GM10248 (cell line): ENCODE measurements at regions of chr2 and their contacts with region 1.

Region 1: GRCh38 chr2:148058641-148059040 is 37.8 kb downstream of the MBD5 start:
- DNase-seq: no peak
- CTCF ChIP-seq: no peak

Region 2: GRCh38 chr2:147806846-147807245 is 251.8 kb before region 1 on chr2:
- CTCF ChIA-PET with region 1: no interaction called
- POLR2A ChIA-PET with region 1: no interaction called
- DNase-seq: no peak
- CTCF ChIP-seq: no peak

Region 3: DNA sequence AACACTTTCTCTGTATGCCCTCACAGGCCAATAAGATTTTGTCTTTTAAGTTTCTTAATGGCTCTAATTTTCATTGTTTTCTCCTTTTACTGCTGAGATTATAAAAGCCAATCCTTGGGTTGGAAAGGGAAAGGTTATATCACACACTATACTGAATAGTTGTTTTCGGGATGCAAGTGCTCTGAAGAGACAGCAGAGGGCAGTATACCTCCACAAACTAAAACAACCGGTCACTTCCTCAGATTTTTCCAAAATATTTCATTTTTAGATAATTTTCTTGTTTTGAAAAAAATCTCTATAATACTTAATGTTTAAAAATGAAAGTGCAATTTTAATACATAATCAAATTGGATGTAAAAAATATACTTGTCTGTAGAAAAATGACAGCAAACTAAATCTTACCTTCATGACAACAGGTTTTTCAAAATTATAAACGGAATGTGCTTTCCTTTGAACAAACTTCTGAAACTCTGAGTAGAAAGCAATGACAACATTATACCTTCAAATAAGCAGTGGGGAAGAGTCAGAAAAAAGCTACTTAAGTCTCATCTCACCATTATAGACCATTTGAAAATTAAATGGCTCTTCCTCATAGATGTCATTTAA is 120.8 kb before region 1 on chr2:
- CTCF ChIA-PET with region 1: no interaction called
- POLR2A ChIA-PET with region 1: interaction called, 17 read pairs
- DNase-seq: peak; percentile 5
- CTCF ChIP-seq: peak; percentile 72

Region 4: GRCh38 chr2:148042219-148042618 is 16.4 kb before region 1 on chr2:
- CTCF ChIA-PET with region 1: no interaction called
- POLR2A ChIA-PET with region 1: no interaction called
- DNase-seq: peak; percentile 38
- CTCF ChIP-seq: no peak